ENCODE measurements at regions of chr6 and their contacts with region 1.

Region 1: GRCh38 chr6:21593412-21593926 is at the start of gene SOX4:
- DNase-seq: peak; percentile 88
- ATAC-seq: peak; percentile 73
- H3K4me3 ChIP-seq: peak within 1 kb of the TSS; percentile 88
- H3K27ac ChIP-seq: peak within 1 kb of the TSS; percentile 81
- H3K4me1 ChIP-seq: no peaks in the 10 kb centered on the region
- H3K27me3 ChIP-seq: no peaks in the 10 kb centered on the region
- CTCF ChIP-seq: no peak
- EP300 ChIP-seq: no peak
- POLR2A ChIP-seq: peak; percentile 99
- RAD21 ChIP-seq: 0 out of 2 replicates have a peak, but pooled peaks have one; percentile 1
- polyA plus RNA-seq, gene SOX4: 46.3 to 119 TPM

Region 2: DNA sequence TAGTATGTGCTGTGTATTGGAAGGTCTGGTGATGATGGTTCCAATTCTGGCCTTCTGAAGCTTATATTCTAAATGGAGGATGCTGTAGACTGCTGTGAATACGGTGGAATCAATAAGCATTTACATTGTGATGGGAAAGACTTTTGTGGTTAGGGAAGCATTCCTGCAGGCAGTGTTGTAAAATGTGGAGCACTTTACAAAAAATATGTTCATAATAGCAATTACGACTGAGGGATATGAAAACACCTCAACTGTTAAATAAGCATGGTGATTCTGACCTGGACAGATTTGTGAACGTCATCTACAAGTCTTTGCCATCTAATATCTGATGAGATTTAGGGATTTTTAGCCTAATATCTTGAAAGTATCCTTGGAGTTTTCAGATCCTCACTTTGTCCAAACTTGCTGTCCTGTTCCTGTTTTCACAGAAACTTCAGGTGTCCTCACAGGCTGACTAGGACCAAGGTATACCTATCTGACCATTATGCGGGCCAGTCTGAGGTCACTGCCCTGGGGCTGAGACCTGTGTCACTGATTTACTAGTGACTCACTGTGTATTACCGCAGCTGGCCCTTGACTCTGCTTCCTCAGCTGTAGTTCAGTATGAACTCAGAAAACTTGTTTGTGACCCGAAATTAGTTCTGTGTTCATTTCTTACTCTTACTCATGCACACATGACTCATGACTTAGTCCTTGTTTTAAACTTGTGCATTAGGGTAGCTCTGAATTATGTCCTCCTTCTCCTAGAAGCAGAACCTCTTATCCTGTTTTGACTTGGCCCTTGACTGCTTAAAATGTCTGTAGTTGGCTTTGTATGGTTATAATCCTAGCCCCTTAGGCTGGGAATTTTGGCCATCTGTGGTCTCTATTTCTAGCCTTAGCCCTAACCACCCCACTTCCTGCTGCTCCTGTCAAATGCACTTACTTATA is 716.2 kb before region 1 on chr6:
- CTCF ChIA-PET with region 1: interaction called, 38 read pairs
- POLR2A ChIA-PET with region 1: interaction called, 17 read pairs
- RAD21 ChIA-PET with region 1: interaction called, 68 read pairs
- SMC1A ChIA-PET with region 1: interaction called, 48 read pairs
- in situ Hi-C with region 1: loop called (anchors 10 kb)
- intact Hi-C with region 1: loop called (anchors 1 kb)
- DNase-seq: peak; percentile 89
- ATAC-seq: peak; percentile 98
- H3K4me3 ChIP-seq: no peak overlapping the region
- H3K27ac ChIP-seq: peak overlapping the region; percentile 80
- H3K4me1 ChIP-seq: peaks cover 18% of the 10 kb centered on the region; the same call in 1 of the 2 replicates
- H3K27me3 ChIP-seq: no peaks in the 10 kb centered on the region
- CTCF ChIP-seq: no peak
- EP300 ChIP-seq: peak; percentile 76 to 91
- POLR2A ChIP-seq: no peak
- RAD21 ChIP-seq: no peak

Region 3: DNA sequence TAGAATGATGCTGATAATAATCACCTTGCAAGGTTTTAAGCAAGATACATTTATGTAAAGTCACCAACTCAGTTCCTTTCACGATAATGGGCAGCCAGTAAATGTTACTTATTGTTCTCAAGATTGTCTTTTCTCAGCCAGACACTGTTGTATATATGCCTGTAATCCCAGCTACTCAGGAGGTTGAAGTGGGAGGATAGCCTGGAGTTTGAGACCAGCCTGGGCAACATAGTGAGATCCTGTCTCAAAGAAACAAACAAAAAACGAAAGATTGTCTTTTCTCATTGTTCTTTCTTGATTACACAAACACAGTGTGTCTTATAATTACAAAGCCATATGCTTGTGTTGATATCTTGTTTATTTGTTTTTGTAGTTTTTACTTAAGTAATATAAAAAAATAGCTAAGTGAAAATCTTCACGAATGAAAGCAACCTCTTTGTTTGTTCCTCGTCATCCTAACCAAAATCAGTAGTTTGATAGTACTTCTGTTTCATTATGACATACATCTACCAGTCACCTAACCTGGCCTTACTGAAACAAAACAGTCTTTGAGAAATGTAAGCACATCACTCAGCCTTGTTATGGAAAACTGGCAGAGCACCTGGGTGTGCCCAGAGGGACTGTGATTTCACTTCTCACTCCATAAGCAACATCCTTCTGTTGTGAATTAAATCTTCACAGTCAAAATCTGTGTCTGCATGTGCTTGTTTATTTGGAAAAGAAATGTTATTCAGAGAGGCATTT is 436.1 kb before region 1 on chr6:
- CTCF ChIA-PET with region 1: no interaction called
- POLR2A ChIA-PET with region 1: no interaction called
- RAD21 ChIA-PET with region 1: interaction called, 10 read pairs
- SMC1A ChIA-PET with region 1: interaction called, 3 read pairs
- in situ Hi-C with region 1: no loop called
- intact Hi-C with region 1: no loop called
- DNase-seq: peak; percentile 53
- ATAC-seq: peak; percentile 86
- H3K4me3 ChIP-seq: no peak overlapping the region
- H3K27ac ChIP-seq: peak overlapping the region; percentile 54; the same call in 1 of the 2 replicates
- H3K4me1 ChIP-seq: peaks cover 13% of the 10 kb centered on the region; the same call in 1 of the 2 replicates
- H3K27me3 ChIP-seq: no peaks in the 10 kb centered on the region
- CTCF ChIP-seq: no peak
- EP300 ChIP-seq: peak; percentile 72 to 84; a peak in 3 of 4 replicates
- POLR2A ChIP-seq: no peak
- RAD21 ChIP-seq: no peak

Region 4: DNA sequence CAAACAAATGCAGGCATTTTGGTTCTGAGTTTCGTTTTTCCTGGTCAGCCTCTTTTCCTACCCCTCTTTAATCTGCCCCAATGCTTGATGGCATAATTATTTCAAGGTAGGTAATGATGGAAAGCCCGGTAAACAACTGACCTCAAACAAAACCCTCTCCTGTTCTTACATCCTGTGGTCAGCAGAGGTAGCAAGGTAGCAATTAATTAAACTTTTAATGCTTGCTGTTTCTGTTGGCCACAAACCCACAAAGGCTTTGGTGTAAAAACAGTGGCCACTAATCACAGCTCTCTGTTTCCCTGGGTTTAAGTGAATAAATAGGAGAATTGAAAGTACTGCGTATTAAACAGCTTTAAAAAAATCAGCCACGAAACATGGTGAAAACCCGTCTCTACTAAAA is 261.4 kb before region 1 on chr6:
- CTCF ChIA-PET with region 1: interaction called, 6 read pairs
- POLR2A ChIA-PET with region 1: no interaction called
- RAD21 ChIA-PET with region 1: interaction called, 8 read pairs
- SMC1A ChIA-PET with region 1: interaction called, 9 read pairs
- in situ Hi-C with region 1: no loop called
- intact Hi-C with region 1: loop called (anchors 1 kb)
- DNase-seq: no peak
- ATAC-seq: peak; percentile 81
- H3K4me3 ChIP-seq: no peak overlapping the region
- H3K27ac ChIP-seq: no peak overlapping the region
- H3K4me1 ChIP-seq: no peaks in the 10 kb centered on the region
- H3K27me3 ChIP-seq: no peaks in the 10 kb centered on the region
- CTCF ChIP-seq: peak in 2 of 3 experiments; percentile 7 to 14; a peak in 1 of 6 replicates
- EP300 ChIP-seq: peak in 1 of 2 experiments; percentile 39; a peak in 1 of 4 replicates
- POLR2A ChIP-seq: no peak
- RAD21 ChIP-seq: peak; percentile 42

Region 5: GRCh38 chr6:22062807-22063408 is 469.4 kb after region 1 on chr6:
- CTCF ChIA-PET with region 1: no interaction called
- POLR2A ChIA-PET with region 1: no interaction called
- RAD21 ChIA-PET with region 1: no interaction called
- SMC1A ChIA-PET with region 1: no interaction called
- in situ Hi-C with region 1: no loop called
- intact Hi-C with region 1: loop called (anchors 10 kb)
- DNase-seq: peak; percentile 69
- ATAC-seq: peak; percentile 81
- H3K4me3 ChIP-seq: no peak overlapping the region
- H3K27ac ChIP-seq: peak overlapping the region; percentile 72
- H3K4me1 ChIP-seq: peaks cover 44% of the 10 kb centered on the region
- H3K27me3 ChIP-seq: no peaks in the 10 kb centered on the region
- CTCF ChIP-seq: no peak
- EP300 ChIP-seq: peak; percentile 73 to 78; a peak in 3 of 4 replicates
- POLR2A ChIP-seq: peak; percentile 58
- RAD21 ChIP-seq: no peak

Measured in GM12878 (cell line).